Activated naive CD8-positive, alpha-beta T cell treated with anti-CD3 and anti-CD28 coated beads, Interleukin-2, amount 10 ng/mL, durations not matched to agents 7 days and 5 days (primary cell): ENCODE measurements at regions of chr12 and their contacts with region 1.

Region 1: GRCh38 chr12:26832822-26833742 is at the start of gene ITPR2:
- DNase-seq: peak; percentile 94
- ATAC-seq: peak; percentile 85
- H3K4me3 Mint-ChIP-seq: peak within 1 kb of the TSS; percentile 99
- H3K27ac Mint-ChIP-seq: peak within 1 kb of the TSS; percentile 98
- H3K4me1 Mint-ChIP-seq: peaks cover 30% of the 10 kb centered on the region
- H3K27me3 Mint-ChIP-seq: no peaks in the 10 kb centered on the region
- total RNA-seq, gene ITPR2: 43.3 to 43.5 TPM

Region 2: GRCh38 chr12:26918309-26919215 is 85.5 kb after region 1 on chr12:
- POLR2A ChIA-PET with region 1: no interaction called
- DNase-seq: no peak
- ATAC-seq: no peak
- H3K4me3 Mint-ChIP-seq: no peak overlapping the region
- H3K27ac Mint-ChIP-seq: no peak overlapping the region
- H3K4me1 Mint-ChIP-seq: peaks cover 1% of the 10 kb centered on the region
- H3K27me3 Mint-ChIP-seq: no peaks in the 10 kb centered on the region

Region 3: GRCh38 chr12:26941215-26941594 is 108.1 kb after region 1 on chr12:
- POLR2A ChIA-PET with region 1: interaction called, 10 read pairs
- DNase-seq: no peak
- ATAC-seq: no peak
- H3K4me3 Mint-ChIP-seq: peak overlapping the region; percentile 94
- H3K27ac Mint-ChIP-seq: peak overlapping the region; percentile 86
- H3K4me1 Mint-ChIP-seq: peaks cover 34% of the 10 kb centered on the region
- H3K27me3 Mint-ChIP-seq: no peaks in the 10 kb centered on the region